T-cell (primary cell): ENCODE measurements at regions of chr15 and their contacts with region 1.

Region 1: DNA sequence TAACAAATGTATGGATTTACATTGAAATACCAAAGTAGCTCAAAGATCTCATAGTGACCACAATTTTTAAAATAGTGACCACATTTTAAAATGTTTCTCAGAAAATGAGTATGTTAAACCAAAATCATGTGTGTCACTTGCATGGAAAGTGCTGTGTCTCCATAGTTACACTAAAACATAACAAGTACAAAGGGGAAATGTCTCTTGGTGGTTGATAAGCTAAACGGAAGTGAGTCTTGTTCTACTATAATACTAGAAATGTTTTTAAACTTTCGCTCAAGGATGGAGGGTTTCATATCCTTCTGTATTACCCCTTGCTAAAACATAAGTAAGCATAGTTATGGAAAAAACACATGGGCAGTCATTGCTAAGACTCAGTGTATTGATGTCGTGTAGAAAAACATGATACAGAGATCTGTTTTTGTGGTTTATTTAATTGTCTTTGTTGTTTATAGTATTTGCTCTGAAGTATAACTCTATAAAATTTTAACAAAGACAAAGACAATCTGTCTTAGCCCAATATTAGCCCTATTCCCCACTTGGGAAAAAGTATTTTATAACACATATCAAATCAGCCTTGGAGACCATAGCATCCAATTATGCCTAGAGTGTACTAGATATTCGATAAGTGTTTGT is 27.0 kb upstream of the DENND4A start:
- DNase-seq: peak in 5 of 35 experiments; percentile 21 to 89 (median 36)
- ATAC-seq: peak; percentile 90 to 95 (median 92)
- H3K4me3 ChIP-seq: no peak overlapping the region
- H3K4me3 Mint-ChIP-seq: peak overlapping the region; percentile 62 to 79 (median 63)
- H3K27ac ChIP-seq: peak overlapping the region; percentile 94
- H3K27ac Mint-ChIP-seq: peak overlapping the region; percentile 96 to 97
- H3K4me1 ChIP-seq: peaks cover 26 to 52% of the 10 kb centered on the region in 2 experiments
- H3K4me1 Mint-ChIP-seq: peaks cover 58 to 64% (median 61%) of the 10 kb centered on the region in 3 donors
- H3K27me3 ChIP-seq: no peaks in the 10 kb centered on the region
- H3K27me3 Mint-ChIP-seq: no peaks in the 10 kb centered on the region

Region 2: GRCh38 chr15:65695081-65695480 is 124.0 kb before region 1 on chr15:
- CTCF ChIA-PET with region 1: no interaction called
- POLR2A ChIA-PET with region 1: no interaction called
- DNase-seq: no peak
- ATAC-seq: no peak
- H3K4me3 ChIP-seq: no peak overlapping the region
- H3K4me3 Mint-ChIP-seq: no peak overlapping the region
- H3K27ac ChIP-seq: no peak overlapping the region
- H3K27ac Mint-ChIP-seq: no peak overlapping the region
- H3K4me1 ChIP-seq: no peaks in the 10 kb centered on the region
- H3K4me1 Mint-ChIP-seq: no peaks in the 10 kb centered on the region
- H3K27me3 ChIP-seq: no peaks in the 10 kb centered on the region
- H3K27me3 Mint-ChIP-seq: no peaks in the 10 kb centered on the region

Region 3: DNA sequence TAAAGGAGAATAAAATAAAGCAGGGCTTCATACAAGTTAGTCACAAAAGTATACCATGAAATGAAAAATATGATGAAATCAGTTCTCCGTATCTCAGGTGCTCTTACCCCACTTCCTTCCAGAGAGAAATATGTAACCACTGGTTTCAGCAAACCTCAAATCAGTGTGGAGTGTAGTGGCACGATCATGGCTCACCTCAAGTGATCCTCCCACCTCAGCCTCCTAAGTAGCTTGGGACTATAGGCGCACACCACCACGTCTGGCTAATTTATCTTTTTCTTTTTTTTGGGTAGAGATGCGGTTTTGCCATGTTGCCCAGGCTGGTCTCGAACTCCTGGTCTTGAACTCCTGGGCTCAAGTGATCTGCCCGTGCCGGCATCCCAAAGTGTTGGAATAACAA is 51.1 kb before region 1 on chr15:
- CTCF ChIA-PET with region 1: no interaction called
- POLR2A ChIA-PET with region 1: interaction called in 1 of 2 experiments, 10 read pairs
- DNase-seq: peak in 2 of 35 experiments; percentile 8 to 34
- ATAC-seq: peak; percentile 44 to 83 (median 66)
- H3K4me3 ChIP-seq: no peak overlapping the region
- H3K4me3 Mint-ChIP-seq: no peak overlapping the region
- H3K27ac ChIP-seq: no peak overlapping the region
- H3K27ac Mint-ChIP-seq: peak overlapping the region in 1 of 2 donors; percentile 9
- H3K4me1 ChIP-seq: peaks cover 3 to 16% of the 10 kb centered on the region in 2 experiments
- H3K4me1 Mint-ChIP-seq: peaks cover 57 to 70% (median 66%) of the 10 kb centered on the region in 3 donors
- H3K27me3 ChIP-seq: no peaks in the 10 kb centered on the region
- H3K27me3 Mint-ChIP-seq: no peaks in the 10 kb centered on the region

Region 4: DNA sequence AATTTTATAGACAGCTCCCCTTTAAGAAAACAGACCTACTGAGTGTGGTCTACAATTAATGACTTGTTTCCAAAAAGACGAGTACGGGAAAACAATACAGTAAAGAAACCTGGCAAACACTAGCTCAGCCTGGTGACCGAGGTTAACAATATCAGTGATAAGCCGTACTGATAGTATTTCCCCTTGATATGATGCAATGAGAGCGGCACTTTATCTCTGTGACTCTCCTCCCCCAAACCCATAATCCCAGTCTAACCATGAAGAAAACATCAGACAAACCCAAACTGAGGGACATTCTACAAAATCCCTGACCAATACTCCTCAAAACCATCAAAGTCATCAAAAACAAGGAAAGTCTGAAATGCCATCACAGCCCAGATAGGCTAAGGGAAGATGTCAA is 35.2 kb before region 1 on chr15:
- CTCF ChIA-PET with region 1: interaction called in 1 of 2 experiments, 10 read pairs
- POLR2A ChIA-PET with region 1: interaction called, 5 to 98 read pairs
- DNase-seq: no peak
- ATAC-seq: no peak
- H3K4me3 ChIP-seq: no peak overlapping the region
- H3K4me3 Mint-ChIP-seq: no peak overlapping the region
- H3K27ac ChIP-seq: no peak overlapping the region
- H3K27ac Mint-ChIP-seq: no peak overlapping the region
- H3K4me1 ChIP-seq: peaks cover 19 to 27% of the 10 kb centered on the region in 2 experiments
- H3K4me1 Mint-ChIP-seq: peaks cover 17 to 39% (median 33%) of the 10 kb centered on the region in 3 donors
- H3K27me3 ChIP-seq: no peaks in the 10 kb centered on the region
- H3K27me3 Mint-ChIP-seq: no peaks in the 10 kb centered on the region

Region 5: DNA sequence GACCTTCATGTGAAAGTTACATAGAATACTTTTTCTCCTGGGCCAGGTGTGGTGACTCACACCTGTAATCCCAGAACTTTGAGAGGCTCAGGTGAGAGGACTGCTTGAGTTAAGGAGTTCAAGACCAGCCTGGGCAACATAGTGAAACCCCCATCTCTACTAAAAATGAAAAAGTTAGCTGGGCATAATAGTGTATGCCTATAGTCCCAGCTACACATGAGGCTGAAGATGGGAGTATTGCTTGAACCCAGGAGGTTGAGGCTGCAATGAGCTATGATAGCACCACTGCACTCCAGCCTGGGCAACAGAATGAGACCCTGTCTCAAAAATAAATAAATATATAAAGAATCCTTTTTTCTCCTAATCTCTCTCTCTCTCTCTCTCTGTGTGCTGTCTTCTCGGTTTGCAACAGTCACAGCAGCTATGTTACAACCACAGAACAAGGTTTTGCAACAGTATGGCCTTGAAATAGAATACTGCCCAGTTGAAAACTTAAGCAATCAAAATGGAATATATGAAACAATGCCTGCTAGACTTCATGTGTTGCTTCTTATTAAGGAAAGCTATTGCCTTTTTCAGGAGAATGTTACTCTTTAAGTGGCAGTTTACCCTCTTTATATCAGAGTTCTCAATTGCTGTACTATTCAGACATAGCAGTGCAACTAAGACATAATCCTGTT is 14.7 kb before region 1 on chr15:
- CTCF ChIA-PET with region 1: interaction called, 3 to 10 read pairs
- POLR2A ChIA-PET with region 1: interaction called in 1 of 2 experiments, 8 read pairs
- DNase-seq: no peak
- ATAC-seq: no peak
- H3K4me3 ChIP-seq: no peak overlapping the region
- H3K4me3 Mint-ChIP-seq: no peak overlapping the region
- H3K27ac ChIP-seq: peak overlapping the region; percentile 48
- H3K27ac Mint-ChIP-seq: peak overlapping the region; percentile 76
- H3K4me1 ChIP-seq: peaks cover 15 to 29% of the 10 kb centered on the region in 2 experiments
- H3K4me1 Mint-ChIP-seq: peaks cover 31 to 34% (median 32%) of the 10 kb centered on the region in 3 donors
- H3K27me3 ChIP-seq: no peaks in the 10 kb centered on the region
- H3K27me3 Mint-ChIP-seq: no peaks in the 10 kb centered on the region

Region 6: DNA sequence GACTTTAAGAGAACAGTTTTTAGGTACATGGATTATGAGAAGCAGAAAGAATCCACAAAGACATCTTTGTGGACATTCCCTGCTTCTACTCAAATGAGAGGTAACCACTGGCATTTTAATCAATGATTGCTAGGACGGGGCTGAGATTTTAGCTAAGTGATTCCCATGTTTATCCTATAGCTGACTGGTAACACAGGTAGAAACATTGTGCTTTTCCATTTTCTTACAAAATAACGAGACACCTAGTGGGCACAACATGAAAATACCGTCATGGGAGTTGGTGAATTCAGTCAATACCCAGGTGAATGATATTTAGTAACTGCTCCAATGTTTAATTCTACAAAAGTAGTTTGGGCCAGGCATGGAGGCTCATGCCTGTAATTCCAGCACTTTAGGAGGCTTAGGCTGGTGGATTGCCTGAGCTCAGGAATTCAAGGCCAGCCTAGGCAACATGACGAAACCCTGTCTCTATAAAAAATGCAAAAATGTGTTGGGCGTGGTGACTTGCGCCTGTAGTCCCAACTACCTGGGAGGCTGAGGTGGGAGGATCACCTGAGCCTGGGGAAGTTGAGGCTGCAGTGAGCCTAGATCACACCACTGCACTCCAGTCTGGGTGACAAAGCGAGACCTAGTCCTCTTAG is 10.2 kb after region 1 on chr15:
- CTCF ChIA-PET with region 1: interaction called in 1 of 2 experiments, 17 read pairs
- POLR2A ChIA-PET with region 1: interaction called, 5 to 8 read pairs
- DNase-seq: peak in 9 of 35 experiments; percentile 17 to 73 (median 26)
- ATAC-seq: peak; percentile 44 to 58 (median 45)
- H3K4me3 ChIP-seq: no peak overlapping the region
- H3K4me3 Mint-ChIP-seq: peak overlapping the region; percentile 57 to 79 (median 58)
- H3K27ac ChIP-seq: peak overlapping the region; percentile 79
- H3K27ac Mint-ChIP-seq: peak overlapping the region; percentile 95 to 98
- H3K4me1 ChIP-seq: peaks cover 45 to 65% of the 10 kb centered on the region in 2 experiments
- H3K4me1 Mint-ChIP-seq: peaks cover 62 to 72% (median 69%) of the 10 kb centered on the region in 3 donors
- H3K27me3 ChIP-seq: no peaks in the 10 kb centered on the region
- H3K27me3 Mint-ChIP-seq: no peaks in the 10 kb centered on the region

Region 7: GRCh38 chr15:65869127-65869953 is 50.3 kb after region 1 on chr15 and contains the start of gene RAB11A:
- CTCF ChIA-PET with region 1: interaction called in 1 of 2 experiments, 16 read pairs
- POLR2A ChIA-PET with region 1: interaction called in 1 of 2 experiments, 7 read pairs
- DNase-seq: peak; percentile 88 to 96 (median 93)
- ATAC-seq: peak; percentile 93 to 94 (median 94)
- H3K4me3 ChIP-seq: peak within 1 kb of the TSS; percentile 89 to 99
- H3K4me3 Mint-ChIP-seq: peak within 1 kb of the TSS; percentile 95 to 100 (median 98)
- H3K27ac ChIP-seq: peak within 1 kb of the TSS; percentile 98
- H3K27ac Mint-ChIP-seq: peak within 1 kb of the TSS; percentile 97
- H3K4me1 ChIP-seq: peaks cover 0 to 27% of the 10 kb centered on the region in 2 experiments
- H3K4me1 Mint-ChIP-seq: peaks cover 28 to 39% (median 35%) of the 10 kb centered on the region in 3 donors
- H3K27me3 ChIP-seq: no peaks in the 10 kb centered on the region
- H3K27me3 Mint-ChIP-seq: no peaks in the 10 kb centered on the region
- total RNA-seq, gene RAB11A: 82.4 to 103 (median 97.5) TPM

Region 8: DNA sequence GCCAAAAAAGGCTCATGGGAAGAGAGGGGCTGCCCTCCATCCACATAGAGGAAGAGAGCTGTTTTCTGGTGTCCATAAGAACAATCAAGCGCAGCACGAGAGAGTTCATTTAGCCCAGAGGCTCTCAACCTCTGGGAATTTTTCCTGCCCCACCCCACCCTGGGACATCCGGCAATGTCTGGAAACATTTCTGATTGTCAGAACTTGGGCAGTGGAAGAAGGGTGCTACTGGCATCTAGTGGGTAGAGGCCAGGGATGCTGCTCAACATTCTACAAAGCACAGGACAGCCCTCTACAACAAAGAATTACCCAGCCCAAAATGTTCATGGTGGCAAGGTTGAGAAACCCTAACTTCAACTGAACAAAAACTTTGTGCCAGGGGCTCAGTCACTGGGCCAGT is 143.1 kb after region 1 on chr15:
- CTCF ChIA-PET with region 1: no interaction called
- POLR2A ChIA-PET with region 1: no interaction called
- DNase-seq: no peak
- ATAC-seq: no peak
- H3K4me3 ChIP-seq: no peak overlapping the region
- H3K4me3 Mint-ChIP-seq: no peak overlapping the region
- H3K27ac ChIP-seq: no peak overlapping the region
- H3K27ac Mint-ChIP-seq: no peak overlapping the region
- H3K4me1 ChIP-seq: no peaks in the 10 kb centered on the region
- H3K4me1 Mint-ChIP-seq: peaks cover 0 to 10% (median 0%) of the 10 kb centered on the region in 3 donors
- H3K27me3 ChIP-seq: peaks cover 0 to 28% of the 10 kb centered on the region in 2 experiments
- H3K27me3 Mint-ChIP-seq: peaks cover 18 to 38% of the 10 kb centered on the region in 2 donors